ENCODE measurements at regions of chr15 and their contacts with region 1.

Region 1: DNA sequence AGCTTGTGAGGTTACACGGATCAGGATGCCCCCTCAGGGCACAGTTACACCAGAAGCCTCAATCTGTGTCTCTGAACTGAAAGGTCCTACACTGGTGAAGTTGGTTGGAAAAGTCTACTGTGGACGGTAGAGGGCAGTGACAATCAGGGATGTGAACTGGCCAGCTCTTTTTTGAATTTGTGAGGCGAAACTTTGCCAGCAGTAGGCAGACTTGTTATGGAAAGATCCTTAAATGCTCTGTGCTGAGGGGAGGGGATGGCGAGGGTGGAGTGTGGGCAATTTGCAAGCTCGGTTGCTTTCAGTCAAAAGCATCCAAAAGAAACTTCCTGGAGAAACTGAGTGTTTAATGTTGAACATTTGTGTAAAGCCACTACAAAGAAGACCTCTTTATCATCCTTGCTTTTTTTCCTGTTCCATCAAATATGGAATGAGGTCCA is 127.4 kb upstream of the ABHD17C start:
- DNase-seq: peak in 1 of 2 donors; percentile 55
- ATAC-seq: peak; percentile 80
- H3K4me3 ChIP-seq: no peak overlapping the region
- H3K27ac ChIP-seq: no peak overlapping the region
- H3K4me1 ChIP-seq: no peaks in the 10 kb centered on the region
- H3K27me3 ChIP-seq: no peaks in the 10 kb centered on the region

Region 2: GRCh38 chr15:80455668-80456442 is 111.9 kb before region 1 on chr15:
- intact Hi-C with region 1: loop called (anchors 2 to 5 kb)
- DNase-seq: peak in 1 of 2 donors; percentile 65
- ATAC-seq: peak; percentile 70
- H3K4me3 ChIP-seq: no peak overlapping the region
- H3K27ac ChIP-seq: no peak overlapping the region
- H3K4me1 ChIP-seq: no peaks in the 10 kb centered on the region
- H3K27me3 ChIP-seq: no peaks in the 10 kb centered on the region

Region 3: GRCh38 chr15:80536231-80536630 is 31.5 kb before region 1 on chr15:
- intact Hi-C with region 1: no loop called
- DNase-seq: no peak
- ATAC-seq: no peak
- H3K4me3 ChIP-seq: no peak overlapping the region
- H3K27ac ChIP-seq: no peak overlapping the region
- H3K4me1 ChIP-seq: no peaks in the 10 kb centered on the region
- H3K27me3 ChIP-seq: no peaks in the 10 kb centered on the region

Region 4: DNA sequence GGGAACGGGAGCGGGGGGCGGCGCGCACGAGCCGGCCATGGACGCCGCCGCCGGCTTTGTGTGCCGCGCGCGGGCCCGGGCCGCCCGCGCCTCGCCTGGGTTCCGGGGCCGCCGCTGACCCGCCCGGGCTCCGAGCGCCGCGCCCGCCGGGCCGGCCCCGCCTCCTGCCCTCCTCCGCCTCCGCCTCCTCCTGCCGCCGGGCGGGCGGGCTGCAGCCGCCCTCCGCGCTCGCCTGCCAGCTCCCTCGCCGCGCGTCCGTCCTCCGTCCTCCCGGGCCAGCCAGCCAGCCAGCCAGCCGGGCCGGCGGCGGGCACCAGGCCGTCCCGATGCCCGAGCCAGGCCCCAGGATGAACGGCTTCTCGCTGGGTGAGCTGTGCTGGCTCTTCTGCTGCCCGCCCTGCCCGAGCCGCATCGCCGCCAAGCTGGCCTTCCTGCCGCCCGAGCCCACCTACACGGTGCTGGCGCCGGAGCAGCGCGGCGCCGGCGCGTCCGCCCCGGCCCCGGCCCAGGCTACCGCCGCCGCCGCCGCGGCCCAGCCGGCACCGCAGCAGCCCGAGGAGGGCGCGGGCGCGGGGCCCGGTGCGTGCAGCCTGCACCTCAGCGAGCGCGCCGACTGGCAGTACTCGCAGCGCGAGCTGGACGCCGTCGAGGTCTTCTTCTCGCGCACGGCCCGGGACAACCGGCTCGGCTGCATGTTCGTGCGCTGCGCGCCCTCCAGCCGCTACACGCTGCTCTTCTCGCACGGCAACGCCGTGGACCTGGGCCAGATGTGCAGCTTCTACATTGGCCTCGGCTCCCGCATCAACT is 127.6 kb after region 1 on chr15 and contains the start of gene ABHD17C:
- intact Hi-C with region 1: loop called in 1 of 2 experiments (anchors 5 kb)
- DNase-seq: peak; percentile 75 to 88
- ATAC-seq: peak; percentile 82
- H3K4me3 ChIP-seq: peak within 1 kb of the TSS; percentile 94 to 99
- H3K27ac ChIP-seq: peak within 1 kb of the TSS; percentile 70 to 84
- H3K4me1 ChIP-seq: no peaks in the 10 kb centered on the region
- H3K27me3 ChIP-seq: no peaks in the 10 kb centered on the region
- total RNA-seq, gene ABHD17C: 4.2 to 8.3 TPM

Region 5: DNA sequence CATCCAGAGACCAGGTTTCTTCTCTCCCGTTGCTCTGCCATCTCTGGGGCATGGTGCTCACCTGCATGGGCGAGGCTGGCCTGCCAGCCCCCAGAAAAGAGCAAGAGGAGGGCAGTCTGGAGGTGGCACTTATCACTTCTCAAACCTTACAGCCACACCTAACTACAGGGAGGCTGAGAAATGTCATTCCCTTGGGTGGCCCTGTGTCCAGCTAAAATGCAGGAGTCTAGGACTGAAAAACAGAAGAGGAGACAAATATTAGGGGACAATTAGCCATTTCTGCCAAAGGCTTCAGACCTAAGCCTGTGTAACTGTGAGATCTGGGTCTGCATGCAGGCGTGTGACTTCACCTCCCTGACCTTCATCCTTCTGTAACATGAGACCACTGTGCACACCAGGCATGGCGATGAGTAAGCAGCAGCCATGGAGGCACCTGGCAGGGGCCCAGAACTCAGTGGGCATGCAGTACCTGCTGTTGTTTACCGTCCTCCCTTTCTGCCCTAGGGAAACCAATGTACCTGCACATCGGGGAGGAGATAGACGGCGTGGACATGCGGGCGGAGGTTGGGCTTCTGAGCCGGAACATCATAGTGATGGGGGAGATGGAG is 338.5 kb after region 1 on chr15:
- intact Hi-C with region 1: no loop called
- DNase-seq: no peak
- ATAC-seq: no peak
- H3K4me3 ChIP-seq: no peak overlapping the region
- H3K27ac ChIP-seq: no peak overlapping the region
- H3K4me1 ChIP-seq: no peaks in the 10 kb centered on the region
- H3K27me3 ChIP-seq: no peaks in the 10 kb centered on the region

Measured in aorta (tissue), 5 donors.